AG04449 (cell line): ENCODE measurements at regions of chr4 and their contacts with region 1.

Region 1: GRCh38 chr4:149897783-149898182 is 82.1 kb upstream of the IQCM start:
- DNase-seq: no peak
- H3K4me3 ChIP-seq: no peak overlapping the region
- CTCF ChIP-seq: peak; percentile 24

Region 2: GRCh38 chr4:149370785-149371420 is 526.9 kb before region 1 on chr4:
- CTCF ChIA-PET with region 1: interaction called, 103 read pairs
- POLR2A ChIA-PET with region 1: no interaction called
- DNase-seq: peak; percentile 3
- H3K4me3 ChIP-seq: no peak overlapping the region
- CTCF ChIP-seq: peak; percentile 44

Region 3: GRCh38 chr4:149885896-149886295 is 11.9 kb before region 1 on chr4:
- CTCF ChIA-PET with region 1: interaction called, 19 read pairs
- POLR2A ChIA-PET with region 1: no interaction called
- DNase-seq: peak; percentile 70
- H3K4me3 ChIP-seq: no peak overlapping the region
- CTCF ChIP-seq: no peak

Region 4: DNA sequence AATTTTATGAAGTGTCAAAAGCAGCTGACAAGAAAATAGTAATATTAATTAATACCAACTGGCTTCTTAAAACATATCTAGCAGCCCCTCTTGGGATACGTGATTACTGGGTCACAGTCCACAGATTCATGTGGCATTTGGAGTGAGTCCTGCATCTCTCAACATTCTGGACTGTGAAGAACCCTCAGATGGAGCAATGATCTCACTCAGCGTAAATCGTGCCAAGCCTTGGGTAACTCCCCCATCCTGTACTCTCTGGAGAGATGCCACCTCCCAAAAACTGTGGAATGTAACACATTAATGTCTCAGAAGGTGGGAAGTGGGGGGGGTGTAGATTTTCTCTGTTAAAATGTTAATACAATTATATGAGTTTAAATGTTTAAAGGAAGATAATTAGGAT is 36.1 kb after region 1 on chr4:
- CTCF ChIA-PET with region 1: no interaction called
- POLR2A ChIA-PET with region 1: no interaction called
- DNase-seq: no peak
- H3K4me3 ChIP-seq: no peak overlapping the region
- CTCF ChIP-seq: no peak